HCT116 (cell line): ENCODE measurements at regions of chr11 and their contacts with region 1.

Region 1: DNA sequence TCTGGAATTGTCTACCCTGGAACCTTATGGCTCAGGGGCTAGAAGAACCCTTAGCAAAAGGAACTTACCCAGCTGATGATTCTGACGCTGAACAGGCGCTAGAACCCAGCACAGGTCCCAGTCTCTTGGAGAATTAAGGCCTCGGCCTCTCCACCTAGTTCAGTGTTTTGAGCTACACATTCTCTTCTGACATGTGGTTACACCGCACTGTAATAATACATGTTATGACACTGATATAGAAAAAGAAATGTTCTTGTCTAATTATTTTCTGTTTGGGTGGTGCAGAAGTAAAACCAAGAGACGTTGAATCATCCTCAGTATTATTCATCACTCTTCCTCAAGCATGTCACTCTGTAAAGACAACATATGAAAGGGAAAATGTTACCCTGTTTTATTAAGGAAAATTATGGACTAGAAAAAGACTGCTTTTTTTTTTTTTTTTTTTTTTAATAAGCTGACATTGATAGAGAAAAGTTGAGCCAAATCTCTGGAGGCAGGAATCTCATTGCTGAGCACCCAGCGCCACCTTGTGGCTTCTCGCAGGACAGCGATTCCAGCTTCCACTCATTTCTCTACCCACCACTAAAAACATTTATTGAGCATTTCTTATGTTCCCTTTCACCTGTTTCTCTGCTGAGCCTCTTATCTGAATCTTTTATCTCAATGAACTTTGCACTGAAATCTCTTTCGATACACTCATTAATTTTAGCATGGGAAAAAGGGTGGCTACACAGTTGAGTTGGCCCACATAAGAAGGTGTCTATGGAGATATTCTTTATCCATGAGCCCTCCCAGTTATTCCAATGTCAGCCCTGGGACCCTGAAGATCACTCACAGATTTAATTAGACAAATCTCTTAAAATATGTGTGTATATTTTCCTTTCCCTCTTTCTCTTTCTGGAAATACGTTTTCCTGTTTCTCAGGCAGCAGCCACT is 12.6 kb upstream of the APLNR start:
- DNase-seq: peak; percentile 27
- ATAC-seq: peak; percentile 70
- H3K4me3 ChIP-seq: no peak overlapping the region
- H3K27ac ChIP-seq: no peak overlapping the region
- H3K4me1 ChIP-seq: no peaks in the 10 kb centered on the region
- H3K27me3 ChIP-seq: peaks cover 8% of the 10 kb centered on the region; the same call in 1 of the 2 replicates
- CTCF ChIP-seq: peak; percentile 72 to 90 (median 84); a peak in 5 of 6 replicates
- POLR2A ChIP-seq: no peak
- RAD21 ChIP-seq: peak; percentile 84

Region 2: GRCh38 chr11:56841210-56841810 is 408.3 kb before region 1 on chr11:
- CTCF ChIA-PET with region 1: interaction called, 82 read pairs
- POLR2A ChIA-PET with region 1: no interaction called
- RAD21 ChIA-PET with region 1: no interaction called
- intact Hi-C with region 1: loop called (anchors 1 kb)
- DNase-seq: peak; percentile 27
- ATAC-seq: peak; percentile 57
- H3K4me3 ChIP-seq: no peak overlapping the region
- H3K27ac ChIP-seq: no peak overlapping the region
- H3K4me1 ChIP-seq: no peaks in the 10 kb centered on the region
- H3K27me3 ChIP-seq: no peaks in the 10 kb centered on the region
- CTCF ChIP-seq: peak; percentile 35 to 65 (median 54); a peak in 5 of 6 replicates
- POLR2A ChIP-seq: no peak
- RAD21 ChIP-seq: peak; percentile 68

Region 3: GRCh38 chr11:57116654-57117053 is 133.0 kb before region 1 on chr11:
- CTCF ChIA-PET with region 1: interaction called, 48 read pairs
- POLR2A ChIA-PET with region 1: no interaction called
- RAD21 ChIA-PET with region 1: interaction called, 7 to 13 read pairs
- intact Hi-C with region 1: loop called (anchors 1 kb)
- DNase-seq: peak; percentile 19
- ATAC-seq: peak; percentile 88
- H3K4me3 ChIP-seq: no peak overlapping the region
- H3K27ac ChIP-seq: no peak overlapping the region
- H3K4me1 ChIP-seq: no peaks in the 10 kb centered on the region
- H3K27me3 ChIP-seq: no peaks in the 10 kb centered on the region
- CTCF ChIP-seq: peak; percentile 48 to 71 (median 59); a peak in 5 of 6 replicates
- POLR2A ChIP-seq: no peak
- RAD21 ChIP-seq: peak; percentile 72

Region 4: GRCh38 chr11:57131080-57131790 is 118.4 kb before region 1 on chr11:
- CTCF ChIA-PET with region 1: interaction called, 105 read pairs
- POLR2A ChIA-PET with region 1: interaction called, 3 read pairs
- RAD21 ChIA-PET with region 1: interaction called, 3 to 5 read pairs
- intact Hi-C with region 1: loop called (anchors 1 kb)
- DNase-seq: no peak
- ATAC-seq: peak; percentile 95
- H3K4me3 ChIP-seq: no peak overlapping the region
- H3K27ac ChIP-seq: no peak overlapping the region
- H3K4me1 ChIP-seq: no peaks in the 10 kb centered on the region; a peak in 1 of 4 replicates
- H3K27me3 ChIP-seq: peaks cover 54% of the 10 kb centered on the region
- CTCF ChIP-seq: peak; percentile 57 to 69 (median 68); a peak in 5 of 6 replicates
- POLR2A ChIP-seq: no peak
- RAD21 ChIP-seq: peak; percentile 75

Region 5: GRCh38 chr11:57191314-57192219 is 58.1 kb before region 1 on chr11:
- CTCF ChIA-PET with region 1: no interaction called
- POLR2A ChIA-PET with region 1: no interaction called
- RAD21 ChIA-PET with region 1: no interaction called
- intact Hi-C with region 1: no loop called
- DNase-seq: no peak
- ATAC-seq: no peak
- H3K4me3 ChIP-seq: no peak overlapping the region
- H3K27ac ChIP-seq: no peak overlapping the region
- H3K4me1 ChIP-seq: no peaks in the 10 kb centered on the region
- H3K27me3 ChIP-seq: 0 out of 2 replicates have a peak, but pooled peaks cover 22% of the 10 kb centered on the region
- CTCF ChIP-seq: no peak
- POLR2A ChIP-seq: no peak
- RAD21 ChIP-seq: no peak